HepG2 (cell line): ENCODE measurements at regions of chr2 and their contacts with region 1.

Region 1: DNA sequence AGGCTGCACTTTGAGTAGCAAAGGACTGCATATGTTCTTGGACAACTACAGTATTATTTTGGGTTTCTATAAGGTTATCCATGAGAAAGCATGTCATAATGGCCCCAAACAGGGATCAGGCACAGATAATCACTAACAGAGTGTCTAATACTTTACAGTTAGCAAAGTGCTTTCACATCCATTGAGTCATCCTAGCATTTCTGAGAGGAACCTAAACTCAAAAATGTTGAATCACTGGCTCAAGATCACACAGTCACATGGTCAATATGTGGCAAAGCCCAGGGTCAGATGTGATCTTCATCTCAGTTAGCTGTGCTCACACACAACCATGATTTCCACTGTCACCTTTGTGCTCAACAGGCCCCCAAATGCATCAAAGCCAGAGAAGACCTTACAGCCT is 156.1 kb upstream of the VRK2 start:
- DNase-seq: no peak
- ATAC-seq: no peak
- H3K4me3 ChIP-seq: no peak overlapping the region
- H3K27ac ChIP-seq: no peak overlapping the region
- H3K4me1 ChIP-seq: peaks cover 20% of the 10 kb centered on the region
- H3K27me3 ChIP-seq: no peaks in the 10 kb centered on the region
- CTCF ChIP-seq: no peak
- EP300 ChIP-seq: no peak
- POLR2A ChIP-seq: no peak
- RAD21 ChIP-seq: no peak

Region 2: GRCh38 chr2:56666777-56667176 is 1223.7 kb before region 1 on chr2:
- CTCF ChIA-PET with region 1: no interaction called
- POLR2A ChIA-PET with region 1: no interaction called
- in situ Hi-C with region 1: no loop called
- intact Hi-C with region 1: no loop called
- DNase-seq: no peak
- ATAC-seq: no peak
- H3K4me3 ChIP-seq: no peak overlapping the region
- H3K27ac ChIP-seq: no peak overlapping the region
- H3K4me1 ChIP-seq: no peaks in the 10 kb centered on the region
- H3K27me3 ChIP-seq: no peaks in the 10 kb centered on the region
- CTCF ChIP-seq: no peak
- EP300 ChIP-seq: no peak
- POLR2A ChIP-seq: no peak
- RAD21 ChIP-seq: no peak

Region 3: DNA sequence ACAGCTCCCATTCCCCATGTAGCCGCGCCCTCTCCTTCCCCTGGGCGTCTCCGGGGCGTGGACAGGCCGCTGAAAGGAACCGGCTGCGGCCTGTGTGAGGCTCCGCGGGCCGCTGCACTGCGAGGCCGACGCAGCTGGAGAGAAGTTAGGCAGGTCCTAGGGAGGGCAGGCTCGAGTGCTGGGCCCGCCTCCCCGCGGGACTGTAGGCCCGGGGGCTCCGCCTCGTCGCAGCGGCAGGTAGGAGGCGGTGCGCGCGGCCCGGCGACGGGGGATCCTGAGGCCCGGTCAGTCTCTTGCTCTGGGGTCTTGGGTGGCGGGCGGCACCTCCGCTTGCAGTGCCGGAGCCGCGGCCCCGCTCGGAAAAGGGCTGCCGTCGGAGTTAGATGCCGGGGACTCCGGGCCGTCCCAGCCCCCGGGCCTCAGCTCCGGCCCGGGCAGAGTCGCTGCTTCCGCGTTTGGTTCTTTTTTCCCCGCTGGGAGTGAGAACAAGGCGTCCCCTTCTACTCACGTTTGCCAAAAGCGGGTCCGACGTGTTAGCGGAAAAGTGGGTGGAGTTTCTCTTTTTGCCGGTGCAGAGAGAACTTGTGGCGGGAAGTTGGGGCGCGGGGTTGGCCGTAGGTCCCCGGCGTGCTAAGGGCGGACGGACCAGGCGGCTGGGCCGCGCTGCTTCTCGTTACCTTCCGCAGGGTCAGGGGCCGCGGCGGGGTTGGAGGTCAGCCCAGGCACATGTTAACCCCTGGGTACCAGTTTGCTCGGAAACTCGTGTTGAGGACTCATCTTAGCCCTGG is 156.3 kb after region 1 on chr2 and contains the start of gene VRK2:
- CTCF ChIA-PET with region 1: no interaction called
- POLR2A ChIA-PET with region 1: no interaction called
- in situ Hi-C with region 1: no loop called
- intact Hi-C with region 1: loop called (anchors 5 kb)
- DNase-seq: peak; percentile 91
- ATAC-seq: peak; percentile 97
- H3K4me3 ChIP-seq: peak within 1 kb of the TSS; percentile 59 to 76 (median 65)
- H3K27ac ChIP-seq: peak within 1 kb of the TSS; percentile 92
- H3K4me1 ChIP-seq: peaks cover 48% of the 10 kb centered on the region
- H3K27me3 ChIP-seq: no peaks in the 10 kb centered on the region; a peak in 1 of 5 replicates
- CTCF ChIP-seq: peak; percentile 52
- EP300 ChIP-seq: 0 out of 4 replicates have a peak, but pooled peaks have one; percentile 7 to 11
- POLR2A ChIP-seq: peak; percentile 86 to 91
- RAD21 ChIP-seq: peak; percentile 45
- total RNA-seq, gene VRK2: 29.1 and 41.1 TPM in 2 replicates